Activated T-helper 1 cell treated with anti-CD3 and anti-CD28 coated beads, Interleukin-12 subunit alpha, Interleukin-12 subunit beta, Interleukin-2, Interleukin-4 antibody, amounts not matched to agents 30 ng/mL and 10 ng/mL and 1 ng/mL, durations not matched to agents 14 hours and 24 hours and 36 hours (primary cell): ENCODE measurements at regions of chr2 and their contacts with region 1.

Region 1: DNA sequence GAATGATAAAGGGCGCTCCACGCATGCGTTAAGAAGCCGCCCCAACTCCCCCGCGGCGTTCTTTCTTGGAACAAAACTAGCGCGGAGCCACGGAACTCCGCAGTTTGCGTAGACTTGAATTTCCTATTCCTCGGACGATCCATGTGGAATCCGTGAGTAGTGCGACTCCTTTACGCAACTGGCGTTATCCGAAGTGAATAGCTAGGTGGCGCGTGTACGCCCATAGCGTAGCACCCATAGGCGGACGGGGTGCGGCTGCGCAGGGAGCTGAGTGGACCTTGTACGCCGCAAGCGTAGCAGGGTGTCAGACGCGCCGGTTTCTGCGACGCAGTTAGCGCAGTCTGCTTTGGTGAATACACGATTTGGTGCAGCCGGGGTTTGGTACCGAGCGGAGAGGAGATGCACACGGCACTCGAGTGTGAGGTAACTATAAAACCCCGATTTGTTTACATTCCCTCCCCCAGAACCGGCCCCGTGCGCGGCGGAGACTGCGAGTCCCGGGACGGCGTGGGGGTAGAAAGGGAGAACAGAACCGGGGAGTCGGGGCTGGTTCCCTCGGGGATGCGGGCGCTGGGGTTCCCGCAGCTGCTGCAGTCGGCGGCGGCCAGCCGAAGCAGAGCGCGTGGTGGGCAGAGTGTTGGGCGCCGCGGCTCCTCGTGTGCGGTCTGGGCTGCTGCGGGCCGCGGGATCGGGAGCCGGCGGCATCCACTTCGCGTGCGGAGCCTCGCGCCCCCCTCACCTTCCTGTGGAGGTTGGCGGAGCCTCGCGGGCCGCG is at the start of gene SLC39A10:
- DNase-seq: peak; percentile 97
- H3K4me3 Mint-ChIP-seq: peak within 1 kb of the TSS; percentile 99
- H3K27ac Mint-ChIP-seq: peak within 1 kb of the TSS; percentile 100
- H3K4me1 Mint-ChIP-seq: peaks cover 32% of the 10 kb centered on the region
- H3K27me3 Mint-ChIP-seq: no peaks in the 10 kb centered on the region
- total RNA-seq, gene SLC39A10: 32.4 and 32.5 TPM in 2 replicates

Region 2: GRCh38 chr2:195318440-195319111 is 338.5 kb before region 1 on chr2:
- intact Hi-C with region 1: loop called (anchors 1 kb)
- DNase-seq: peak; percentile 20
- H3K4me3 Mint-ChIP-seq: no peak overlapping the region
- H3K27ac Mint-ChIP-seq: no peak overlapping the region
- H3K4me1 Mint-ChIP-seq: peaks cover 23% of the 10 kb centered on the region
- H3K27me3 Mint-ChIP-seq: no peaks in the 10 kb centered on the region

Region 3: DNA sequence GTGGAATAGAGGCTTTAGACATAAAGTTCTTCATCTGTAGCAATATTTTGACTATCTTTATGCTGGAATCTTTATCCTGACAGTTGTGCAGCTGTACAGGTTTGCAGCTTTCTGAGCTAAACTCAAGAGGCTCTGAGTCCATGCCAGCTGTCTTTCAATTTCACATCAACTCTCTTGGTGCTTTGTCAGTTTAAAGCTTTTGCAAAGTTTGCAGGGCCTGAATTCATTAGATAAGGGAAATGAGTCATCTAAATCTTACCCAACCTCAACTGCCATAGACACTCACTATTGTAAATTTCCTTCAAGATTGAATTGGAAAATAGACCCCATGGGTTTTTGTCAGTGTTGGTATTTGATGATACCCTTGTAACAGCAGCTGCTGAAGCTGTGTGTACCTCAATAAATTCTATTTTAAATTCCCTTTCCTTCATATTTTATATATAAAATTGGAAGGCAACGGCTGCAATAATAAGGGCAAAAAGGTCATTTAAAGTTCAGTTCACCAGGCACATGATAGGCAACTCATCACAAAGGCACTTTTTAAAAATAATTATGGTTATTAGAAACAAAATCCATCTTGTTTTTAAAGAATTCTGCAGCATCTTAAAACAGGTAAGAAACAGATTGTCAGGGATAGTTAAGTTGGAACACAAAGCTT is 169.9 kb before region 1 on chr2:
- intact Hi-C with region 1: loop called (anchors 1 kb)
- DNase-seq: peak; percentile 26
- H3K4me3 Mint-ChIP-seq: peak overlapping the region; percentile 32
- H3K27ac Mint-ChIP-seq: peak overlapping the region; percentile 61
- H3K4me1 Mint-ChIP-seq: peaks cover 56% of the 10 kb centered on the region
- H3K27me3 Mint-ChIP-seq: no peaks in the 10 kb centered on the region

Region 4: DNA sequence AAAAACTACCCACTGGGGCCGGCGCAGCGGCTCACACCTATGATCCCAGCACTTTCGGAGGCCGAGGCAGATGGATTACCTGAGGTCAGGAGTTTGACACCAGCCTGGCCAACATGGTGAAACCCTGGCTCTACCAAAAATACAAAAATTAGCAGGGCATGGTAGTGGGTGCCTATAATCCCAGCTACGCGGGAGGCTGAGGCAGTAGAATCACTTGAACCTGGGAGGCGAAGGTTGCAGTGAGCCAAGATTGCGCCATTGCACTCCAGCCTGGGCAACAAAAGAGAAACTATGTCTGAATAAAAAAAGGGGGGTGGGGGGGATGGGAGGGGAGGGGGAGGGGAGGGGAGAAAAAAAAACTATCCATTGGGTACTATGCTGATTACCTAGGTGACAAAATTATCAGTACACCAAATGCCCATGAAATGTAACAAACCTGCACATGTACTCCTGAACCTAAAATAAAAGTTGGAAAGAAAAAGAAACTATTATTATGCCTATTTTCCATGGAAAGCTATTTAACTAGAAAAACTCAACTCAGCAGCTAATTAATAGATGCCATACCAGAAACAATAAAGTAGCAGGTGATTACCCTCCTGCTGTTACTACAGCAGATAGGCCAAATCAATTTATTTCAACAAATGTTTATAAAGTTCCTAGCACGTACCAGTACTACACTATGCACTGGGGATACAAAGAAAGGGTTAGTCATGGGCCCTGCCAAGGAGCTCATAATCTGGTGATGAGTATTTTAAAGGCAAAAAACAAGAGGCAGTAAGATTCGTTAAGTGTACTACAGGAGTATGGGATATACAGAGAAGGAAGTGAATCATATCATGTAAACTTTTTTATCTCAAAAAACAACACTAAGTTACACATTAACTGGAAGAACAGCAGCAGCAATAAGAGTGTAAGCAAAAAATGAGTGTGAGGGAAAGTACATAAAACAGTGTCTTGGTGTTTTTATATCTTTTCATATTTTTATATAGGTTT is 112.8 kb before region 1 on chr2:
- intact Hi-C with region 1: loop called (anchors 1 kb)
- DNase-seq: no peak
- H3K4me3 Mint-ChIP-seq: peak overlapping the region; percentile 32
- H3K27ac Mint-ChIP-seq: peak overlapping the region; percentile 88
- H3K4me1 Mint-ChIP-seq: peaks cover 83% of the 10 kb centered on the region
- H3K27me3 Mint-ChIP-seq: no peaks in the 10 kb centered on the region

Region 5: GRCh38 chr2:195604706-195605105 is 52.3 kb before region 1 on chr2:
- intact Hi-C with region 1: loop called (anchors 2 kb)
- DNase-seq: no peak
- H3K4me3 Mint-ChIP-seq: no peak overlapping the region
- H3K27ac Mint-ChIP-seq: no peak overlapping the region
- H3K4me1 Mint-ChIP-seq: peaks cover 26% of the 10 kb centered on the region
- H3K27me3 Mint-ChIP-seq: peaks cover 2% of the 10 kb centered on the region

Region 6: DNA sequence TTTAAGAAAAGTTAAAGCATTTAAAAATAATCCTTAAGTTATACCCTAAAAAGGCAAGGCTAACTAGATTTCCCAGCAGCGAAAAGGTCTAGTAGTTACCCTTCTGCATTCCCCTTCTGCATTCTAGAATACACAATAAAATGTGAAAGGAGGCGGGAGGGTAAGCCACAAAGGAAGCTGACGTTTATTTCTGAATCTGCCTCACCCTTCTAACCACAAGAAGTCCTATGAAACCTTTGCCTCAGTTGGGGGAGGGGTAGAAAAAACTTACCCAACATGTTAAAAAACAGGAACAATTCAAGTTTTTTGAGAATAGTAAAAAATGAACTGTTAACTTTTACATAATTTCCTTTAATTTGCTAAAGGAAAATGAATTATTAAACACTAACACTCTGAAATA is 503.1 kb after region 1 on chr2:
- intact Hi-C with region 1: loop called (anchors 5 kb)
- DNase-seq: peak; percentile 74
- H3K4me3 Mint-ChIP-seq: peak overlapping the region; percentile 76
- H3K27ac Mint-ChIP-seq: peak overlapping the region; percentile 93
- H3K4me1 Mint-ChIP-seq: peaks cover 91% of the 10 kb centered on the region
- H3K27me3 Mint-ChIP-seq: no peaks in the 10 kb centered on the region

Region 7: GRCh38 chr2:196639180-196640030 is 982.4 kb after region 1 on chr2 and contains the start of gene CCDC150:
- intact Hi-C with region 1: loop called (anchors 1 kb)
- DNase-seq: peak; percentile 93
- H3K4me3 Mint-ChIP-seq: peak within 1 kb of the TSS; percentile 78
- H3K27ac Mint-ChIP-seq: peak within 1 kb of the TSS; percentile 81
- H3K4me1 Mint-ChIP-seq: peaks cover 28% of the 10 kb centered on the region
- H3K27me3 Mint-ChIP-seq: peaks cover 13% of the 10 kb centered on the region
- total RNA-seq, gene CCDC150: 16.7 and 19.6 TPM in 2 replicates